Sigmoid colon (tissue), 7 donors: ENCODE measurements at regions of chr12 and their contacts with region 1.

Region 1: DNA sequence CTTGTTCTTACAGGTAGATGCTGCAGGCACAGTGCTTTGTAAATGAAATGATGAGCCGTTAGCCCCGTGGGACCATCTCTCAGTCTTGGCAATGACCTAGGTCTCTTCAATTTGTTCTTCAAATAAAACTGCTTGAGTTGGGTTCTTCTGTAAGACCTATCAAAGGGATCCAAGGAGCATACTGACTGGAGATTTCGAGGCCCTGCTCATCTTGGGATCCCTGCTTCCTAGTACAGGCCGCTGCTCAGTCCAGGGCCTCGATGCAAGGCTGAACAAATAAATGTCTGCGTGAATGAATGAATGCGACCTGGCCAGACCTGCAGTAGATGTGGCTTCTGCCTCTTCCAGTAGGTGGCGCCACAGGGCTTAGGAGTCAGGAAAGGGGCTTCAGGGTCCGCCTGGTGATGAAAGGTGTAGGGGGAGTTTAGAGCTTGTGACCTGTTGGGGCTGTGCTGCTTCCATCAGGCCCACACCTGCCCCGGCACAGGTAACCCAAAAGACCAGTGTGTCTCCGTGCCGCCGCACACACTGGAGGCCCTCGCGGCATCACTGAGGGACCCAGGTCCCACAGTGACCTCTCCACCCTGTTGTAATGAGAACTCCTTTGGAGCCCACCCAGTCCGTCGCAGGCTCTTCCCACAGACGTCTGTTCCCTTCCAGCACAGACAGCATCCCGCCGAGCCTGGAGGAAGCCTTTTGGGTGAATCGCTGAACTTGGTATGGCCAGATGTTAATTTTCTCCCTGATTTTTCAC is 4.4 kb downstream of the CACNA1C start:
- DNase-seq: peak; percentile 90
- H3K4me3 ChIP-seq: peak overlapping the region; percentile 15 to 92 (median 45)
- H3K27ac ChIP-seq: peak overlapping the region; percentile 80 to 98 (median 97)
- H3K4me1 ChIP-seq: peaks cover 0 to 64% (median 57%) of the 10 kb centered on the region in 4 donors
- H3K27me3 ChIP-seq: no peaks in the 10 kb centered on the region
- CTCF ChIP-seq: peak; percentile 79 to 90 (median 83)
- EP300 ChIP-seq: no peak
- POLR2A ChIP-seq: no peak

Region 2: DNA sequence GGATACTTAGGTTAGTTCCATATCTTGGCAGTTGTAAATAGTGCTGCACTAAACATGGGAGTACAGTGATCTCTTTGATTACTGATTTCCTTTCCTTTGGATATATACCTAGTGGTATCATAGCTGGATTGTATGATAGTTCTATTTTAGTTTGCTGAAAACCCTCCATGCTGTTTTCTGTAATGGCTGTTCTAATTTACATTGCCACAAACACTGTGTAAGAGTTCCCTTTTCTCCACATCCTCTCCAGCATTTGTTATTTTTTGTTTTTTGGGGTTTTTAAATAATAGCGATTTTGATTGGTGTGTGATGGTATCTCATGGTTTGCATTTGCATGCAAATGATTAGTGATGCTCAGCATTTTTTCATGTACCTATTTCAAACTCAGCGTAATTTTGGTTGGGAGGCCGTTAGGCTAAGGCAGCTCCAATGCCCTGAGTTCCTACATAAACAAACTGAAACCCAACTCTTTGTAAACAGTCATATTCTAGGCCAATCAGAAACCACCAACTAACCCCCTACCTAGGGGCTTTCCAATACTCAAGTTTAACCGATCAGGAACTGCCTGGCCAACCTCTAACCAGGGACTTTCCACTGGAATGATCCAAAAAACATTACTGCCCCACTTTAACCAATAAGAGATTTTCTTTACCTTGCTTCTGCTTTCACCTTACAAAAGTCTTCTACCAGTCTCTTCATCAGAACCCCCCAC is 634.5 kb before region 1 on chr12:
- intact Hi-C with region 1: no loop called
- DNase-seq: no peak
- H3K4me3 ChIP-seq: no peak overlapping the region
- H3K27ac ChIP-seq: no peak overlapping the region
- H3K4me1 ChIP-seq: no peaks in the 10 kb centered on the region
- H3K27me3 ChIP-seq: no peaks in the 10 kb centered on the region
- CTCF ChIP-seq: no peak
- EP300 ChIP-seq: no peak
- POLR2A ChIP-seq: no peak

Region 3: GRCh38 chr12:2095864-2096263 is 38.6 kb after region 1 on chr12:
- intact Hi-C with region 1: loop called (anchors 5 kb)
- DNase-seq: peak; percentile 96
- H3K4me3 ChIP-seq: no peak overlapping the region
- H3K27ac ChIP-seq: peak overlapping the region; percentile 78 to 91 (median 89)
- H3K4me1 ChIP-seq: peaks cover 0 to 97% (median 95%) of the 10 kb centered on the region in 4 donors
- H3K27me3 ChIP-seq: no peaks in the 10 kb centered on the region
- CTCF ChIP-seq: no peak
- EP300 ChIP-seq: peak; percentile 96 to 99 (median 98)
- POLR2A ChIP-seq: no peak

Region 4: GRCh38 chr12:2273288-2273687 is 216.1 kb after region 1 on chr12:
- intact Hi-C with region 1: loop called (anchors 2 kb)
- DNase-seq: peak; percentile 85
- H3K4me3 ChIP-seq: no peak overlapping the region
- H3K27ac ChIP-seq: peak overlapping the region; percentile 22 to 84 (median 78)
- H3K4me1 ChIP-seq: peaks cover 0 to 62% (median 46%) of the 10 kb centered on the region in 4 donors
- H3K27me3 ChIP-seq: no peaks in the 10 kb centered on the region
- CTCF ChIP-seq: peak in 1 of 4 experiments; percentile 45
- EP300 ChIP-seq: no peak
- POLR2A ChIP-seq: no peak

Region 5: GRCh38 chr12:2341871-2342270 is 284.7 kb after region 1 on chr12:
- intact Hi-C with region 1: loop called (anchors 5 kb)
- DNase-seq: no peak
- H3K4me3 ChIP-seq: no peak overlapping the region
- H3K27ac ChIP-seq: peak overlapping the region; percentile 39 to 94 (median 84)
- H3K4me1 ChIP-seq: peaks cover 0 to 98% (median 88%) of the 10 kb centered on the region in 4 donors
- H3K27me3 ChIP-seq: no peaks in the 10 kb centered on the region
- CTCF ChIP-seq: no peak
- EP300 ChIP-seq: no peak
- POLR2A ChIP-seq: no peak

Region 6: GRCh38 chr12:2583091-2583497 is 525.9 kb after region 1 on chr12:
- intact Hi-C with region 1: loop called (anchors 2 kb)
- DNase-seq: peak; percentile 82
- H3K4me3 ChIP-seq: peak overlapping the region in 1 of 4 donors; percentile 8
- H3K27ac ChIP-seq: peak overlapping the region in 3 of 4 donors; percentile 57 to 72 (median 71)
- H3K4me1 ChIP-seq: peaks cover 0 to 34% (median 23%) of the 10 kb centered on the region in 4 donors
- H3K27me3 ChIP-seq: no peaks in the 10 kb centered on the region
- CTCF ChIP-seq: peak; percentile 71 to 95 (median 86)
- EP300 ChIP-seq: no peak
- POLR2A ChIP-seq: no peak